Mammary epithelial cell (primary cell): ENCODE measurements at regions of chr2 and their contacts with region 1.

Region 1: DNA sequence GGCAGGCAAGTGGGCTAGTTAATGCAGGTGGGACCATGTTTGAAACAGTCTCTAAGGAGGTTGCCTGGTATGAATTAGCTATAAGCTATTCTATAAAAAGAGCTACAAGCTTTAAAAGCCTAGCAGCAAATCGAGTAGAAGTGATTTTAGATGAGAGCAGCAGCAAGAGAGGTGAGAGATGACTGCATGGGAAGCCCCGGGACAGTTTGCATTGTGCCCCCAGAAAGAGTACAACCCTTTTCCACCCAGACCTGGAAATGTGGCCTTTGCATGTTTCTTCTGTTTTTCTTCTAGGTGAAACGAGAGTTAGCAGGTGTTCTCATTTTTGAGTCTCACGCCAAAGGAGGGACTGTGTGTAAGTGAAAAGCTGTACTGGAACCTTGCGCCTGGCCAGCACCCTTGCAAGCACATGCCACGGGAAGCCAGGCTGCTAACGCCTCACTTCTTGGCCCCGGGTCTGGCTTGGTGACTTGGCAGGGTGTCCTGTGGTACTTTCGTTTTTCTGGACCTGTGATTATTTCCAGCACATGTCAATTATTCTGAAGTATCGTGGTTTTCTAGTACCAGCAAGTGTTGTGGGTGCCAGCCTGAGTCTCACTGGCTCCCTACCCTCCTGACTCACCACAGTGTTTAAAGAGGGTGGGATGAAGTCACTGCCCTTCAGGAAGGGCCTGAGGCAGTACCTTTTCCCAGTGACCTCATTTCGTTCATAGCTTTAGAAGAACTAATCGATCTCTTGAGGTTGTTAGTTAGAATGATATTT is 90.3 kb upstream of the MAP3K20 start:
- DNase-seq: peak; percentile 92
- H3K4me3 ChIP-seq: peak overlapping the region in 2 of 3 experiments; percentile 27 to 35
- H3K27ac ChIP-seq: peak overlapping the region; percentile 72
- H3K4me1 ChIP-seq: peaks cover 16% of the 10 kb centered on the region
- H3K27me3 ChIP-seq: no peaks in the 10 kb centered on the region
- CTCF ChIP-seq: no peak

Region 2: GRCh38 chr2:172995323-172996244 is 10.3 kb after region 1 on chr2:
- CTCF ChIA-PET with region 1: interaction called, 3 read pairs
- dilution Hi-C with region 1: no loop called
- in situ Hi-C with region 1: no loop called
- intact Hi-C with region 1: loop called (anchors 1 kb)
- DNase-seq: peak; percentile 78
- H3K4me3 ChIP-seq: no peak overlapping the region
- H3K27ac ChIP-seq: peak overlapping the region; percentile 57
- H3K4me1 ChIP-seq: peaks cover 32% of the 10 kb centered on the region
- H3K27me3 ChIP-seq: no peaks in the 10 kb centered on the region
- CTCF ChIP-seq: peak; percentile 6 to 26

Region 3: DNA sequence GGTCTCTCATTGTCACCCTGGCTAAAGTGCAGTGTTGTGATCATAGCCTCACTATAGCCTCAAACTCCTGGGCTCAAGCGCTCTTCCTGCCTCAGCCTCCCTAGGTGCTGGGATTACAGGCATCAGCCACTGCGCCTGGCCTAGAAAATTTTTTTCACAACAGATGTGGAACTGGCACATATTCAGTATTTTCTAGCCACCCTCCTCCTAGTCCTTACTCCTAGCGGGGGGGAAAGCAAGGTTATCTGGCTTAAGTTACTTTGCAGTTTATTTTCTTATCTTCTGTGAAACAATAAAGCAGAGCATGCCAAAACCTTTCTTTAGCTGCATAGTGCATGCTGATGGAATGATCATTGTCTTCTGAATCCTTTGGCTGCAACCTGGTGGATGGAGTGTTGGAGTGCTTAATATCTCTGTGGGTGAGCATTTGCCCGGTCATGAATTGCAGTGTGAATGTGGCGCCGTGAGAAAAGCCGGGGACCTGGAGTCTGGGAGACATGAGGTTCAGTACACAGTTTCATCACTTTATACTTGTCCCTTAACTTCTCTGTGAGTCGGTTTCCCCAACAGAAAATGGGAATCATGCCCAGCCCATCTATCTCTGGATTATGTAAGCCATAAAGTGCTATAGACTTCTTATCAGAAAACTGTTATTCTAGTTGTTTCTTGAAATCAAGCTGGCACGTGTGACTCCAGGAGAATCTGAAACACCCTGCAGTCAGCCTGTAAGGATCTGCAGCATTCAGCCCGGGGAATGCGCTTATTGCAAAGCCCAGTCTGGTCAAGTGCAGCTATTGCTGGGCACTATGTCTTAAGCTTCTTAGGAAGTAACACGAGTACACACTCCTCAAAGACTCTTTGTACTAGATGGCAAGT is 52.2 kb after region 1 on chr2:
- CTCF ChIA-PET with region 1: no interaction called
- dilution Hi-C with region 1: loop called (anchors 5 kb)
- in situ Hi-C with region 1: no loop called
- intact Hi-C with region 1: no loop called
- DNase-seq: no peak
- H3K4me3 ChIP-seq: no peak overlapping the region
- H3K27ac ChIP-seq: no peak overlapping the region
- H3K4me1 ChIP-seq: no peaks in the 10 kb centered on the region
- H3K27me3 ChIP-seq: no peaks in the 10 kb centered on the region
- CTCF ChIP-seq: no peak

Region 4: GRCh38 chr2:173488861-173489260 is 503.5 kb after region 1 on chr2:
- CTCF ChIA-PET with region 1: no interaction called
- dilution Hi-C with region 1: no loop called
- in situ Hi-C with region 1: no loop called
- intact Hi-C with region 1: no loop called
- DNase-seq: no peak
- H3K4me3 ChIP-seq: no peak overlapping the region
- H3K27ac ChIP-seq: no peak overlapping the region
- H3K4me1 ChIP-seq: no peaks in the 10 kb centered on the region
- H3K27me3 ChIP-seq: peaks cover 8% of the 10 kb centered on the region
- CTCF ChIP-seq: no peak